T-cell (primary cell): ENCODE measurements at regions of chr11 and their contacts with region 1.

Region 1: DNA sequence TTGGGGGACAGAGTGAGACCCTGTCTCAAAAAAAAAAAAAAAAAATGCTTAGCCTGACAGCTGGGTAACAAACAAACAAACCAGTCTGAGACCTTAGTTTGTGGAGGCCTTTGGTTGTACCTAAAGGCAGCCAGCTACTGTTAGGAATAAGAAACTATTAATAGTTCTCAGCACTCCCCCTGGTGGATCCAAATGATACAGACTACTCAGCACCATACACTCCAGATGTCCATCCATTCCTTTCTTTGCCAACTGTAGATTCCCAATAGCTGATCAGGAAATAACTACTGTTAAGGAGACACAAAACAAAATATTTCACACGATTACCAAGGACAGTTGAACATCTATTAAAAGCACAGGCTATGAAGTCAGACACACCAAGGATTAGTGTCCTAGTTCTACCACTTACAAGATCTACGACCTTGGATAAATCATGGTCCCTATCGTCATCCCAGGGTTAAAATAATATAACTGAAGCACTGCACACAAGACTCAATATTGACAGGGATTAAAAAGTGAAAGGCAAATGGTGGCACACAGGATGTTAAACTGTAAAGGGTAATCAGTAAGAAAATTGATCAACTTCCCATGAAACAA is 17.2 kb downstream of the CLDN25 start:
- DNase-seq: peak in 3 of 35 experiments; percentile 6 to 49 (median 12)
- ATAC-seq: peak in 3 of 4 experiments; percentile 54 to 66 (median 63)
- H3K4me3 ChIP-seq: no peak overlapping the region
- H3K4me3 Mint-ChIP-seq: no peak overlapping the region
- H3K27ac ChIP-seq: no peak overlapping the region
- H3K27ac Mint-ChIP-seq: no peak overlapping the region
- H3K4me1 ChIP-seq: no peaks in the 10 kb centered on the region
- H3K4me1 Mint-ChIP-seq: no peaks in the 10 kb centered on the region
- H3K27me3 ChIP-seq: no peaks in the 10 kb centered on the region
- H3K27me3 Mint-ChIP-seq: no peaks in the 10 kb centered on the region

Region 2: DNA sequence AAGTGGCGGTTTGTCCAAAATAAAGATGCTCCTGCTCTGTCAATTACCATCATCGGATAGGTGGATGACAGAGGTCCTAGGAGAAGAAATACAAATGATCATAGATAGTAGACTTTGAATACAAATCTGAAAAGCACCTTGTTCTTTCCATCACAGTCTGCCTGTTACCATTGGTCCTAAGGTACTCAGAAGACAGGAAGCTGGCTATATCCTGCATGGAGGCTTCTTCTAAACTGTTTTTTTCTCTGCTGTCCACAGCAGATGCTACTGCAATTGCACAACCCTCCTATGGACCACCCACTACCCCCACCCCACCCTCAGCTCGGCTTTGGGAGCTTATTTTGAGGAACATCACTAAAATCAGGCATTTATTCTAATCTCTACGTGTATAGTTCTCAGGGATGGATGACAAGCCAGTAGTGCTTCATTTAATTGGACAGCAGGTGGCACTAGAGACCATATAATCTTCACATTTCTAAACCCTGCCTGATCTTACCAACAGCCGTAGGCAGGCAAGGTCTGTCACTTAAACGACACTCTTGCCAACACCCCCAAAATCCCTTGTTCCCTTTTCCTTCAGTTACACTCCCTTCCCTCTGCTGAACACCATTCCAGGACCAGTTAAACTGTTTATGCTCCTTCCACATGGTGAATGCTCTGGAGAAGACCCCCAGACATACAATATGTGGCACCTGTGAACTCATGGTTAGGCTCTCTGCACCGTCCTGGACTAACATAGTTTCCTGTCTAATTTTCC is 1577.1 kb before region 1 on chr11:
- CTCF ChIA-PET with region 1: interaction called in 1 of 2 experiments, 11 read pairs
- POLR2A ChIA-PET with region 1: no interaction called
- DNase-seq: peak in 31 of 35 experiments; percentile 1 to 91 (median 22)
- ATAC-seq: peak; percentile 96 to 99 (median 97)
- H3K4me3 ChIP-seq: no peak overlapping the region
- H3K4me3 Mint-ChIP-seq: no peak overlapping the region
- H3K27ac ChIP-seq: no peak overlapping the region
- H3K27ac Mint-ChIP-seq: no peak overlapping the region
- H3K4me1 ChIP-seq: peaks cover 0 to 5% of the 10 kb centered on the region in 2 experiments
- H3K4me1 Mint-ChIP-seq: peaks cover 0 to 4% (median 2%) of the 10 kb centered on the region in 3 donors
- H3K27me3 ChIP-seq: peaks cover 0 to 4% of the 10 kb centered on the region in 2 experiments
- H3K27me3 Mint-ChIP-seq: no peaks in the 10 kb centered on the region

Region 3: GRCh38 chr11:113305440-113306336 is 491.1 kb before region 1 on chr11:
- CTCF ChIA-PET with region 1: interaction called, 3 to 13 read pairs
- POLR2A ChIA-PET with region 1: no interaction called
- DNase-seq: peak; percentile 28 to 81 (median 60)
- ATAC-seq: peak; percentile 73 to 93 (median 84)
- H3K4me3 ChIP-seq: no peak overlapping the region
- H3K4me3 Mint-ChIP-seq: no peak overlapping the region
- H3K27ac ChIP-seq: no peak overlapping the region
- H3K27ac Mint-ChIP-seq: no peak overlapping the region
- H3K4me1 ChIP-seq: no peaks in the 10 kb centered on the region
- H3K4me1 Mint-ChIP-seq: peaks cover 0 to 11% (median 0%) of the 10 kb centered on the region in 3 donors
- H3K27me3 ChIP-seq: peaks cover 0 to 5% of the 10 kb centered on the region in 2 experiments
- H3K27me3 Mint-ChIP-seq: peaks cover 3 to 4% of the 10 kb centered on the region in 2 donors